SK-N-SH (cell line): ENCODE measurements at regions of chr3 and their contacts with region 1.

Region 1: DNA sequence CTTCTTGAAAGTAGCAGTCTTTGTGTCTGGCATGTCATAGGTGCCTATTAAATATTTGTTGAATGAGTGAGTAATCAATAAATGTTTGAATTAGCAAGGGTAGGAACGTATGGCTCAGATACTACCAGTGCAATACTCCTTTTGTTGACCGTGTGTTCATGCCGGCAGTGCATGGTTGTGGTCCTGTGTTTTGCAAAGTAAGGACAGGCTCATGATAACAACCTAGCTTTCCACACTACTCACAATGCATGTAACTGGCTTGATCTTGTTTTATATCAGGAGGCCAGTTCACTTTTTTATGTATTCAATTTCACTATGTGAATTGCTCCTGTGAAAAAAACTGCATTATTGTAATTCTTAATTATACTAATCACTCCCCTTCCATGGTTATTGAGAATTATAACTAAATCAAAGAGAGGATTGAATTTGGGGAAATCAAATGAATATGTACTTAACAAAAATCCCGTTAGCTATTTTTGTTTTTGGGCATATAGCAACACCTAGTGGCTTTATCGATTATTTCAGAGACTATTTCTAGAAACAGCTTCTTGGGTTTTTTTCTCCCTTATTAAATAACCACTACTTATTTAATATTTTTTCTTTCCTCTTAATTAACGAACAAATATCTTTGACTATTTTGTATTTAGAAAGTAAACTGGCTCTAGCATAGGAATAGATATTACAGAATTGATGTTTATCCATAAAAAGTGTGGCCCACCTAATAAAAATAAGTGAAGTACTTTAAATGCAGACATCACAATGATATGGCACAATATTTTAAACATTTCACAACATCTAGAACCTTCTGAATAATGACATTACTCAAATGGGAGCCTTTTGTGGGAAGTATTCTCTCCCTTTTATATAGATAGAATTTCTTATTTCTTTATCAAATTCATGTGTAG is 218.5 kb downstream of the BBX start:
- DNase-seq: no peak
- H3K4me3 ChIP-seq: no peak overlapping the region
- H3K27ac ChIP-seq: no peak overlapping the region
- H3K4me1 ChIP-seq: no peaks in the 10 kb centered on the region; a peak in 2 of 4 replicates
- H3K27me3 ChIP-seq: no peaks in the 10 kb centered on the region
- CTCF ChIP-seq: peak; percentile 70
- EP300 ChIP-seq: no peak
- RAD21 ChIP-seq: peak; percentile 78

Region 2: DNA sequence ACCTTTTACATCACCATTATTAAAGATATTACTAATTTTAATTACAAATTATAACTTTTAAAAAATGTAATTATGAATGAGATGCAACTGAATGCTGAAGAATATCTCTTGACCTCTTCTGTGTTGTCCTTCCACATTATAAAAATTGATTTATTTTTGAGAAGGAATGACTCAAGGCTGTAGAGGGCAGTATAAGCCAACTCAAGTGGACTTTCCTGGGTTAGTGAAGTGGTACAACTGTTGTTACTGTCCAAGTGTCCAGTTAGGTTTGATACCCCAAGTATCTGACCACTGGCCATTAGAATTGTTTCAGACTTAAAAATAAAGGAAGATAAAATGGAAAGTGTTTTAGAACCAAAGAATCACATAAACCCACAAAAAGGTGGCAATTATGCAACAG is 166.6 kb before region 1 on chr3:
- CTCF ChIA-PET with region 1: interaction called, 12 read pairs
- POLR2A ChIA-PET with region 1: no interaction called
- DNase-seq: peak; percentile 35
- H3K4me3 ChIP-seq: no peak overlapping the region
- H3K27ac ChIP-seq: no peak overlapping the region
- H3K4me1 ChIP-seq: peaks cover 0 to 4% of the 10 kb centered on the region in 2 experiments; a peak in 1 of 4 replicates
- H3K27me3 ChIP-seq: no peaks in the 10 kb centered on the region
- CTCF ChIP-seq: peak; percentile 68
- EP300 ChIP-seq: no peak
- RAD21 ChIP-seq: peak; percentile 85

Region 3: GRCh38 chr3:107676469-107677309 is 64.6 kb before region 1 on chr3:
- CTCF ChIA-PET with region 1: interaction called, 99 read pairs
- POLR2A ChIA-PET with region 1: no interaction called
- DNase-seq: peak; percentile 29
- H3K4me3 ChIP-seq: no peak overlapping the region; a peak in 1 of 4 replicates
- H3K27ac ChIP-seq: no peak overlapping the region
- H3K4me1 ChIP-seq: no peaks in the 10 kb centered on the region; a peak in 2 of 4 replicates
- H3K27me3 ChIP-seq: no peaks in the 10 kb centered on the region
- CTCF ChIP-seq: peak; percentile 74
- EP300 ChIP-seq: no peak
- RAD21 ChIP-seq: peak; percentile 64

Region 4: DNA sequence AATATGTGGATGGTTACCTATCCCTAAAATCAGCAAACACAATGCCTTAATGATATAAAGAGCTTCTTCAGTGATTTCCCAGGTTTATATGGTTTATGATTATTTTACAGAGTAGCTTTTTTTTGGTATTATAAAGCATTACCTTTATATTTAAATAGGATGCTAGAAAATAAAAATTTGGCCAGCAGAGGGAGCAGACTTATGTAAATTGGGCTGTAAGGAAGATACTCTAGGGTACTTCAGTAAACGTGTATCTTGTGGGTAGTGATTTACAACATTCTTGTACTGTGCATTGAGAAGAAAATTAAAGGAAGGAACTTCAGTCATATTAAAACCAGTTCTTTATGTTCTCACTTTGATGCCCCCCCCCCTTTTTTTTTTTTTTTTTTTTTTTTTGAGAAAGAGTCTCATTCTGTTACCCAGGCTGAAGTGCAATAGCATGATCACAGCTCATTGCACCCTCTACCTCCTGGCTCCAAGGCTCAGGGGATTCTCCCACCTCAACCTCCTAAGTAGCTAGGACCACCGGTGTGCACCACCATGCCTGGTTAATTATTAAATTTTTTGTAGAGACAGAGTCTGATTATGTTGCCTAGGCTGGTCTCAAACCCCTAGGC is 50.6 kb before region 1 on chr3:
- CTCF ChIA-PET with region 1: interaction called, 29 read pairs
- POLR2A ChIA-PET with region 1: no interaction called
- DNase-seq: peak; percentile 35
- H3K4me3 ChIP-seq: no peak overlapping the region; a peak in 1 of 4 replicates
- H3K27ac ChIP-seq: no peak overlapping the region
- H3K4me1 ChIP-seq: no peaks in the 10 kb centered on the region; a peak in 1 of 4 replicates
- H3K27me3 ChIP-seq: no peaks in the 10 kb centered on the region
- CTCF ChIP-seq: peak; percentile 77
- EP300 ChIP-seq: no peak
- RAD21 ChIP-seq: peak; percentile 61

Region 5: GRCh38 chr3:107753480-107753879 is 12.2 kb after region 1 on chr3:
- CTCF ChIA-PET with region 1: interaction called, 30 read pairs
- POLR2A ChIA-PET with region 1: no interaction called
- DNase-seq: peak; percentile 24
- H3K4me3 ChIP-seq: no peak overlapping the region
- H3K27ac ChIP-seq: peak overlapping the region in 1 of 2 experiments; percentile 76; a peak in 2 of 4 replicates
- H3K4me1 ChIP-seq: peaks cover 0 to 26% of the 10 kb centered on the region in 2 experiments; a peak in 2 of 4 replicates
- H3K27me3 ChIP-seq: no peaks in the 10 kb centered on the region
- CTCF ChIP-seq: peak; percentile 65
- EP300 ChIP-seq: no peak
- RAD21 ChIP-seq: peak; percentile 66

Region 6: DNA sequence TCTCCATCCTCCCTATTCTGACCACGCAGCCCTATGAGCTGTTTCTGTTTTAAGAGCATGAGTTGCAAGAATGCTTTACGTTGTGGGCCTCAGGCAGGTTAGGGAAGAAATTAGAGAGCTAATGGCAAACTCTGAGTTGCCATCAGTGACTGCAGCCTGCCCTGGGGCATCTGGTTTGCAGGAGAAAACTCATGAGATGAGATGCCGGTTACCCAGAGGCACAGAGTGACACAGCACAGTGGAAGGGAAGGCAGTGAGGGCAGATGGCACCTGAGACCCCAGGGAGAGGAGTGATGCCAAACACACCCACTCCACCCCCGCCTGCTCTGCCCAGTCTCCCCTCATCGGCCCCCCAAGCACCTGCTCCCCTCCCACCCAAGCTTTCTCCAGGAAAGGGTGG is 84.4 kb after region 1 on chr3:
- CTCF ChIA-PET with region 1: no interaction called
- POLR2A ChIA-PET with region 1: no interaction called
- DNase-seq: no peak
- H3K4me3 ChIP-seq: no peak overlapping the region
- H3K27ac ChIP-seq: no peak overlapping the region
- H3K4me1 ChIP-seq: no peaks in the 10 kb centered on the region; a peak in 1 of 4 replicates
- H3K27me3 ChIP-seq: no peaks in the 10 kb centered on the region
- CTCF ChIP-seq: no peak
- EP300 ChIP-seq: no peak
- RAD21 ChIP-seq: no peak